BJ (cell line): ENCODE measurements at regions of chr15 and their contacts with region 1.

Region 1: GRCh38 chr15:84981054-84981710 is 474 bp upstream of the PDE8A start:
- DNase-seq: peak; percentile 59
- H3K4me3 ChIP-seq: peak overlapping the region; percentile 59
- H3K27me3 ChIP-seq: no peaks in the 10 kb centered on the region
- CTCF ChIP-seq: no peak

Region 2: DNA sequence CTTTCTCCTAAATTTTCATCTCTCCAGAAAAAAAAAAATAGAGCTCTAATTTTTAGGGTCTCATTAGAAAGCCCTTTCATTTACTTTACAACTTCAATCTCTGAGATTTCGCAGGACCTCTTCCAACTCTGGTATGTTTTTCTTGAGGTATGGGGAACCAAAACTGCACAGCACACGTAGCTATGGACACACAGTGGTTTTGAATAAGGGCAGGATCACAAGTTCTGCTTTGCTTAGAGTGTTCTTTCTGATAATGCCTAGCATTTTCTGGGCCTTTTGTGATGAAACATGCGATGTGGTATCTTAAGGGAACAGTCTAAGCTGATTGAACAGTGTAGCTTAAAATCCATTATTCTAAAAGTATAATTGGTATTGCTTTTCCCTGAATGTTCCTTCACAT is 207.5 kb before region 1 on chr15:
- CTCF ChIA-PET with region 1: no interaction called
- POLR2A ChIA-PET with region 1: no interaction called
- DNase-seq: no peak
- H3K4me3 ChIP-seq: no peak overlapping the region
- H3K27me3 ChIP-seq: no peaks in the 10 kb centered on the region
- CTCF ChIP-seq: no peak

Region 3: GRCh38 chr15:84818261-84819131 is 162.7 kb before region 1 on chr15:
- CTCF ChIA-PET with region 1: no interaction called
- POLR2A ChIA-PET with region 1: no interaction called
- DNase-seq: no peak
- H3K4me3 ChIP-seq: no peak overlapping the region
- H3K27me3 ChIP-seq: peaks cover 2% of the 10 kb centered on the region
- CTCF ChIP-seq: no peak

Region 4: DNA sequence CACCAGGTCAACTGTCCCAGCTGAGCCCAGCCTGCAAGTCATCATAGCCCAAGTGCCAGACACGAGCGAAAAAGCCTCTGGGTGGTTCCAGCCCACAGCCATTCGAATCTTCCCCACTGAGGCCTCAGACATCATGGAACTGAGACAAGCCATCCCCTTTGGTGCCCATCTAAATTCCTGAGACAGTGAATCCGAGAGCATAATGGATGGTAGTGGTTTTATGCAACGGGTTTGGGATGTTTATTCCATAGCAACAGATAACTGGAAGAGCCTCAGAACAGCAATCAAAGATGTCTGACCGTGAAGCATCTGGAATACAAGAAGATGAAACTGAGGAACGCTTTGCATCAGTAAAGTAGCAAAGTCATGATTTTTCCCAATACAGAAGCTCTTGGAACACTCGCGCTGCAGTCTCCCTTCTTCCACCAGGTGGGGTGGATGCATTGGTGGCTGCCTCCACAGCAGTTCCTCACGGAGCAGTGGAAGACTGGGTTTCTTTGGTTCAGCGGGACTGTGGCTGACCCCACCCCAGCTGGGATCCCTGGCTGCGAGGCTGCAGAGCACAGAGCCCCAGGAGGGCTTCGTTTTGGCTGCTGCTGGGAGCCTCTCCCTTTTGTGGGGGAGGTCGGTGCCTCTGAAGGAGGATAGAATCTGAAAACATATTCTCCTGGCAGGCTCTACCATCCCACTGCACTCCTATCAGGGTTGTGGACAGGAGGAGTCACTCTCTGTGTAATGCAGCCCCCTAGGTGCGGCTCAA is 25.9 kb before region 1 on chr15:
- CTCF ChIA-PET with region 1: interaction called, 4 read pairs
- POLR2A ChIA-PET with region 1: interaction called, 17 read pairs
- DNase-seq: no peak
- H3K4me3 ChIP-seq: no peak overlapping the region
- H3K27me3 ChIP-seq: no peaks in the 10 kb centered on the region; the same call in 1 of the 2 replicates
- CTCF ChIP-seq: peak; percentile 91